ENCODE measurements at regions of chr5 and their contacts with region 1.

Region 1: GRCh38 chr5:131634996-131635754 is at the start of gene RAPGEF6:
- DNase-seq: peak; percentile 91 to 100 (median 95)
- ATAC-seq: peak; percentile 83
- H3K4me3 ChIP-seq: peak within 1 kb of the TSS; percentile 83
- H3K4me3 Mint-ChIP-seq: peak within 1 kb of the TSS; percentile 96
- H3K27ac ChIP-seq: peak within 1 kb of the TSS; percentile 94 to 98
- H3K27ac Mint-ChIP-seq: peak within 1 kb of the TSS; percentile 99
- H3K4me1 ChIP-seq: peaks cover 61% of the 10 kb centered on the region
- H3K4me1 Mint-ChIP-seq: peaks cover 34% of the 10 kb centered on the region
- H3K27me3 ChIP-seq: no peaks in the 10 kb centered on the region
- H3K27me3 Mint-ChIP-seq: no peaks in the 10 kb centered on the region
- CTCF ChIP-seq: no peak
- total RNA-seq, gene RAPGEF6: 64.3 to 71.7 TPM

Region 2: GRCh38 chr5:131170540-131171275 is 464.5 kb before region 1 on chr5 and contains the start of gene LYRM7:
- CTCF ChIA-PET with region 1: no interaction called
- POLR2A ChIA-PET with region 1: interaction called, 3 read pairs
- intact Hi-C with region 1: loop called in 1 of 2 experiments (anchors 5 kb)
- DNase-seq: peak; percentile 89 to 99 (median 93)
- ATAC-seq: peak; percentile 95
- H3K4me3 ChIP-seq: peak within 1 kb of the TSS; percentile 64 to 76
- H3K4me3 Mint-ChIP-seq: peak within 1 kb of the TSS; percentile 100
- H3K27ac ChIP-seq: peak within 1 kb of the TSS; percentile 73 to 81
- H3K27ac Mint-ChIP-seq: peak within 1 kb of the TSS; percentile 99
- H3K4me1 ChIP-seq: peaks cover 22% of the 10 kb centered on the region
- H3K4me1 Mint-ChIP-seq: peaks cover 45% of the 10 kb centered on the region
- H3K27me3 ChIP-seq: no peaks in the 10 kb centered on the region
- H3K27me3 Mint-ChIP-seq: no peaks in the 10 kb centered on the region
- CTCF ChIP-seq: no peak
- total RNA-seq, gene LYRM7: 8.7 to 8.9 TPM

Region 3: GRCh38 chr5:131488463-131488862 is 146.7 kb before region 1 on chr5:
- CTCF ChIA-PET with region 1: no interaction called
- POLR2A ChIA-PET with region 1: no interaction called
- intact Hi-C with region 1: no loop called
- DNase-seq: peak in 1 of 9 experiments; percentile 25
- ATAC-seq: no peak
- H3K4me3 ChIP-seq: no peak overlapping the region
- H3K4me3 Mint-ChIP-seq: no peak overlapping the region
- H3K27ac ChIP-seq: no peak overlapping the region
- H3K27ac Mint-ChIP-seq: peak overlapping the region; percentile 19
- H3K4me1 ChIP-seq: no peaks in the 10 kb centered on the region
- H3K4me1 Mint-ChIP-seq: peaks cover 29% of the 10 kb centered on the region
- H3K27me3 ChIP-seq: no peaks in the 10 kb centered on the region
- H3K27me3 Mint-ChIP-seq: no peaks in the 10 kb centered on the region
- CTCF ChIP-seq: no peak

Region 4: GRCh38 chr5:131536211-131536826 is 98.9 kb before region 1 on chr5:
- CTCF ChIA-PET with region 1: no interaction called
- POLR2A ChIA-PET with region 1: no interaction called
- intact Hi-C with region 1: loop called in 1 of 2 experiments (anchors 5 kb)
- DNase-seq: peak in 2 of 9 experiments; percentile 32 to 63
- ATAC-seq: peak; percentile 56
- H3K4me3 ChIP-seq: no peak overlapping the region
- H3K4me3 Mint-ChIP-seq: peak overlapping the region; percentile 66
- H3K27ac ChIP-seq: peak overlapping the region; percentile 1 to 41
- H3K27ac Mint-ChIP-seq: peak overlapping the region; percentile 93
- H3K4me1 ChIP-seq: peaks cover 88% of the 10 kb centered on the region
- H3K4me1 Mint-ChIP-seq: peaks cover 82% of the 10 kb centered on the region
- H3K27me3 ChIP-seq: no peaks in the 10 kb centered on the region
- H3K27me3 Mint-ChIP-seq: no peaks in the 10 kb centered on the region
- CTCF ChIP-seq: no peak

Region 5: GRCh38 chr5:131595088-131596033 is 39.8 kb before region 1 on chr5:
- CTCF ChIA-PET with region 1: interaction called, 9 read pairs
- POLR2A ChIA-PET with region 1: interaction called, 7 read pairs
- intact Hi-C with region 1: loop called (anchors 2 kb)
- DNase-seq: peak in 3 of 9 experiments; percentile 29 to 74 (median 58)
- ATAC-seq: peak; percentile 86
- H3K4me3 ChIP-seq: peak overlapping the region in 1 of 2 experiments; percentile 18
- H3K4me3 Mint-ChIP-seq: peak overlapping the region; percentile 53
- H3K27ac ChIP-seq: peak overlapping the region; percentile 0 to 68
- H3K27ac Mint-ChIP-seq: peak overlapping the region; percentile 58
- H3K4me1 ChIP-seq: peaks cover 28% of the 10 kb centered on the region
- H3K4me1 Mint-ChIP-seq: peaks cover 65% of the 10 kb centered on the region
- H3K27me3 ChIP-seq: no peaks in the 10 kb centered on the region
- H3K27me3 Mint-ChIP-seq: no peaks in the 10 kb centered on the region
- CTCF ChIP-seq: no peak

Region 6: GRCh38 chr5:131735393-131735792 is 100.2 kb after region 1 on chr5:
- CTCF ChIA-PET with region 1: no interaction called
- POLR2A ChIA-PET with region 1: no interaction called
- intact Hi-C with region 1: no loop called
- DNase-seq: no peak
- ATAC-seq: no peak
- H3K4me3 ChIP-seq: no peak overlapping the region
- H3K4me3 Mint-ChIP-seq: no peak overlapping the region
- H3K27ac ChIP-seq: no peak overlapping the region
- H3K27ac Mint-ChIP-seq: no peak overlapping the region
- H3K4me1 ChIP-seq: no peaks in the 10 kb centered on the region
- H3K4me1 Mint-ChIP-seq: no peaks in the 10 kb centered on the region
- H3K27me3 ChIP-seq: no peaks in the 10 kb centered on the region
- H3K27me3 Mint-ChIP-seq: no peaks in the 10 kb centered on the region
- CTCF ChIP-seq: no peak